Activated B cell treated with CpG ODN at 0.5 μM for 24 hours (primary cell): ENCODE measurements at regions of chr14 and their contacts with region 1.

Region 1: DNA sequence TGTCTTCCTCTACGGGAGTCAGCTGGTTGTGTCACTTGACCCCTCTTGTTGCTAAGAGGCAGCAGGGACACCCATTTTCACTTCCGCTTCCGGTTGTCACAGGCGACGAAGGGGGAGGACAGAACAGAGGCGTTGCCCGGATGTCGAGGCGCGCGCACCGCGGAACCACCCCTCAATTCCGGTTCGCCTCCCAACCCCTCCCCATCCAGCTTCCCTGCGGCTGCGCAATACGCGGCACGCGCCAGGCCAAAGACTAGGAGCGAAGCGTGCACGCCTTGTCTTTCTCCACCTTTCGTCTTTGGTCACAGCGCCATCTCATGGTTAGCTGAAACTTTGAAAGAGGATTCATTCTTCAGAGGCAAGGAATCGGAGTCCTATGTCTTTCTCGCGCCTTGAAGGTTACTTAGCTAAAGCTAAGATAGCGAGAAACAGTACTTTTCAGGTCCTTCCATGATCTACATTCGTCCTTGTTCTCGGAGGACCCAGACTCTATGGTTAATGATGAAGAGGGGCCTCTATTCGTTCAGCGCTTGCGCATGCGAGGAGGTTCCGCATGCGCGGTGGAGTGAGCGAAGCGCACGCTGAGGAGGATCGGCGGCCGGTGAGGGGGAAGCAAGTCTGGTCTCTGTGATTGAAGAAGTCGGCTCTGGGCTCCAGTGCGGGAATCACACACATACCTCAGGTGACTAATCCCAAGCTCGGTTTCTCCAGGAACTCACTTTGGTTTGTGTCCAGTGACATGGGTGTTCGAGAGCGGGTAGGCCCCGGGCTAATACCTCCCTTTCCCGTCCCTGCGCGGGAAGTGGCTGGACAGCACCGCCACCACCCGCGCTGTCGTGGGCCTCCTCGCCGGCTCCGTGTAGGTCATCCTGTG is at the starts of genes ATP6V1D and EIF2S1:
- DNase-seq: peak; percentile 97
- ATAC-seq: peak; percentile 91
- H3K4me3 Mint-ChIP-seq: peak within 1 kb of the TSS; percentile 99
- H3K27ac Mint-ChIP-seq: peak within 1 kb of the TSS; percentile 97
- H3K4me1 Mint-ChIP-seq: peaks cover 60% of the 10 kb centered on the region
- H3K27me3 Mint-ChIP-seq: no peaks in the 10 kb centered on the region
- CTCF ChIP-seq: peak; percentile 95
- total RNA-seq, gene ATP6V1D: 27.8 and 29.4 TPM in 2 replicates
- total RNA-seq, gene EIF2S1: 84.4 and 96.7 TPM in 2 replicates

Region 2: GRCh38 chr14:66507722-66508546 is 852.1 kb before region 1 on chr14 and contains the start of gene GPHN:
- CTCF ChIA-PET with region 1: interaction called, 5 read pairs
- POLR2A ChIA-PET with region 1: interaction called, 7 read pairs
- intact Hi-C with region 1: loop called (anchors 1 kb)
- DNase-seq: peak; percentile 75
- ATAC-seq: peak; percentile 85
- H3K4me3 Mint-ChIP-seq: peak within 1 kb of the TSS; percentile 97
- H3K27ac Mint-ChIP-seq: peak within 1 kb of the TSS; percentile 86
- H3K4me1 Mint-ChIP-seq: peaks cover 23% of the 10 kb centered on the region
- H3K27me3 Mint-ChIP-seq: peaks cover 6% of the 10 kb centered on the region
- CTCF ChIP-seq: no peak
- total RNA-seq, gene GPHN: 36.9 and 40.8 TPM in 2 replicates

Region 3: GRCh38 chr14:67240978-67241414 is 119.0 kb before region 1 on chr14:
- CTCF ChIA-PET with region 1: no interaction called
- POLR2A ChIA-PET with region 1: interaction called, 5 read pairs
- intact Hi-C with region 1: loop called (anchors 1 kb)
- DNase-seq: peak; percentile 91
- ATAC-seq: peak; percentile 94
- H3K4me3 Mint-ChIP-seq: peak overlapping the region; percentile 93
- H3K27ac Mint-ChIP-seq: peak overlapping the region; percentile 81
- H3K4me1 Mint-ChIP-seq: peaks cover 16% of the 10 kb centered on the region
- H3K27me3 Mint-ChIP-seq: no peaks in the 10 kb centered on the region
- CTCF ChIP-seq: no peak

Region 4: GRCh38 chr14:67619446-67620216 is 259.6 kb after region 1 on chr14 and contains the start of gene ARG2:
- CTCF ChIA-PET with region 1: interaction called, 3 read pairs
- POLR2A ChIA-PET with region 1: no interaction called
- intact Hi-C with region 1: loop called (anchors 1 kb)
- DNase-seq: peak; percentile 95
- ATAC-seq: peak; percentile 94
- H3K4me3 Mint-ChIP-seq: peak within 1 kb of the TSS; percentile 88
- H3K27ac Mint-ChIP-seq: peak within 1 kb of the TSS; percentile 79
- H3K4me1 Mint-ChIP-seq: peaks cover 25% of the 10 kb centered on the region
- H3K27me3 Mint-ChIP-seq: no peaks in the 10 kb centered on the region
- CTCF ChIP-seq: no peak
- total RNA-seq, gene ARG2: 0.40 and 0.46 TPM in 2 replicates

Region 5: DNA sequence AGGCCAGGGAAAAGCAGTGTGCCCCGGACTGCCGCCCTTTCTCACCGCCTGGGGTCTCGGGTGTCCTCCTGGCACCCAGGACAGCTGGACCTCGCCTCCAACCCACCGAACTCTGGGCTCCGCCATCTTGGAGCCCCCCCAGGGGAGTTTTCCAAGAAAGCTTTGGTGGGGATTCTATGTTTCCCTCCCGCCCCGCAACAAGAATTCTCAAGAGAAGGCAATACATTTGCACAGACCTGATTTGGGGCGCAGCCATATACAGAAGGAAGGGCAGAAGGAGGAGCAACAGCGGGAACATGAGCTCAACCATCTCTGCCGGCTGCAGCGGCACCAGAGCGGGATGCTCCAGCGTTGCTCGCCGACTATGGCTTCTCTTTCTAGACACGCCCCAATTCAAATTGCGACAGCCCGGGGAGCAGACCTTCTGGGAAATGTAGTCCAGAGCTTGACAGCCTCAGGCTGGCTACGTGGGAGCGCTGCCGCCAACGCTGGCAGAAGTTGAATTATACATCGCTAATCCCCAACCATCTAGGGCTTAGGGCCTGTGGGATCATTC is 335.5 kb after region 1 on chr14 and contains the start of gene RDH11:
- CTCF ChIA-PET with region 1: no interaction called
- POLR2A ChIA-PET with region 1: interaction called, 3 read pairs
- intact Hi-C with region 1: loop called (anchors 1 kb)
- DNase-seq: peak; percentile 59
- ATAC-seq: peak; percentile 94
- H3K4me3 Mint-ChIP-seq: peak within 1 kb of the TSS; percentile 89
- H3K27ac Mint-ChIP-seq: peak within 1 kb of the TSS; percentile 88
- H3K4me1 Mint-ChIP-seq: peaks cover 13% of the 10 kb centered on the region
- H3K27me3 Mint-ChIP-seq: no peaks in the 10 kb centered on the region
- CTCF ChIP-seq: no peak
- total RNA-seq, gene RDH11: 33.0 and 34.7 TPM in 2 replicates

Region 6: GRCh38 chr14:69153131-69153872 is 1793.3 kb after region 1 on chr14:
- CTCF ChIA-PET with region 1: no interaction called
- POLR2A ChIA-PET with region 1: no interaction called
- intact Hi-C with region 1: loop called (anchors 5 kb)
- DNase-seq: peak; percentile 81
- ATAC-seq: peak; percentile 93
- H3K4me3 Mint-ChIP-seq: peak overlapping the region; percentile 95
- H3K27ac Mint-ChIP-seq: peak overlapping the region; percentile 88
- H3K4me1 Mint-ChIP-seq: peaks cover 28% of the 10 kb centered on the region
- H3K27me3 Mint-ChIP-seq: no peaks in the 10 kb centered on the region
- CTCF ChIP-seq: no peak